Caco-2 (cell line): ENCODE measurements at regions of chr15 and their contacts with region 1.

Region 1: DNA sequence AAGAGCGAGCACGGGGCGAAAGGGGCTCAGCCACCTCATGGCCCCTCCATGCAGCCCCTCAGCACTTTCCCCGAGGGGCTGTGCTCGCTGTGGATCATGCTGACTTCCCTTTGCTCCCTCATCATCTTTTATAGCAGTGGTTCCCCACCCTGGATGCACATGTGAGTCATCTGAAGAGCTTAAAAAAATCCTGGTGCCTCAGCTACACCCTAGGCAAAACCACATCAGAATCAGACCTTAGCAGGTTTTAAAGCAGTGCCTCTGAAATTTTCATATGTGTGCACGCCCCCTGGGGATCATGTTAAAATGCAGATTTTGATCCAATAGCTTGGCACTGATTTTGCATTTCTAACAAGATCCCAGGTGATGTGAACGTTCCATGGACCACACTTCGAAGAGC is 50.9 kb downstream of the FEM1B start:
- DNase-seq: no peak
- H3K4me3 ChIP-seq: no peak overlapping the region
- H3K4me3 Mint-ChIP-seq: no peak overlapping the region
- H3K27ac Mint-ChIP-seq: no peak overlapping the region
- H3K4me1 ChIP-seq: no peaks in the 10 kb centered on the region
- H3K4me1 Mint-ChIP-seq: peaks cover 6% of the 10 kb centered on the region
- H3K27me3 ChIP-seq: no peaks in the 10 kb centered on the region; the same call in none of the 2 replicates
- H3K27me3 Mint-ChIP-seq: peaks cover 28% of the 10 kb centered on the region
- CTCF ChIP-seq: no peak

Region 2: DNA sequence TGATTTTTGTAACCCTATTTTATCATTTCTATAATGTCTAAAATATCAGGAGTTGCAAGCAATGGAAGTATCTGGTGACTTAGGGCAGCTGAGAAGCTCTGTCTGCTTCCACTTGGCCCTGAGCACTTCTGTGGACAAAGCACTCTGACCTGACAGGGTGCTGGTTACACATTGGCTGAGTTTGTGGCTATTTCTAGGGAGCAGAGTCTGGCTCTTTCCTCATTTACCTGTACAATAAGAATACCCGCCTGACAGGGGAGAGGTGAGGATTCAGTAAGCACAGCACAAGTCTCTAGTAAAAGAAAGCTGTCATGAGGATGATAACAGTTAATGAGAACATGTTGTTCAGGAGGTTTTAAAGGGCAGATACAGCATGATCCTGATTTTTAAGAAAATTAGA is 568.6 kb after region 1 on chr15:
- CTCF ChIA-PET with region 1: no interaction called
- POLR2A ChIA-PET with region 1: interaction called, 12 read pairs
- intact Hi-C with region 1: no loop called
- DNase-seq: no peak
- H3K4me3 ChIP-seq: no peak overlapping the region
- H3K4me3 Mint-ChIP-seq: no peak overlapping the region
- H3K27ac Mint-ChIP-seq: no peak overlapping the region
- H3K4me1 ChIP-seq: peaks cover 10% of the 10 kb centered on the region
- H3K4me1 Mint-ChIP-seq: peaks cover 6% of the 10 kb centered on the region
- H3K27me3 ChIP-seq: no peaks in the 10 kb centered on the region
- H3K27me3 Mint-ChIP-seq: peaks cover 12% of the 10 kb centered on the region
- CTCF ChIP-seq: no peak